Heart right ventricle (tissue), 16 donors: ENCODE measurements at regions of chr2 and their contacts with region 1.

Region 1: GRCh38 chr2:68467077-68467960 is at the starts of genes APLF and FBXO48:
- DNase-seq: peak; percentile 94 to 99
- ATAC-seq: peak; percentile 97 to 99 (median 99)
- H3K4me3 ChIP-seq: peak within 1 kb of the TSS; percentile 66 to 95 (median 78)
- H3K27ac ChIP-seq: peak within 1 kb of the TSS; percentile 2 to 94 (median 84)
- H3K4me1 ChIP-seq: peaks cover 0 to 34% (median 17%) of the 10 kb centered on the region in 9 donors
- H3K27me3 ChIP-seq: no peaks in the 10 kb centered on the region
- CTCF ChIP-seq: no peak
- total RNA-seq, gene APLF: 3.4 to 6.5 (median 5.1) TPM
- total RNA-seq, gene FBXO48: 0.27 to 1.2 (median 0.97) TPM

Region 2: DNA sequence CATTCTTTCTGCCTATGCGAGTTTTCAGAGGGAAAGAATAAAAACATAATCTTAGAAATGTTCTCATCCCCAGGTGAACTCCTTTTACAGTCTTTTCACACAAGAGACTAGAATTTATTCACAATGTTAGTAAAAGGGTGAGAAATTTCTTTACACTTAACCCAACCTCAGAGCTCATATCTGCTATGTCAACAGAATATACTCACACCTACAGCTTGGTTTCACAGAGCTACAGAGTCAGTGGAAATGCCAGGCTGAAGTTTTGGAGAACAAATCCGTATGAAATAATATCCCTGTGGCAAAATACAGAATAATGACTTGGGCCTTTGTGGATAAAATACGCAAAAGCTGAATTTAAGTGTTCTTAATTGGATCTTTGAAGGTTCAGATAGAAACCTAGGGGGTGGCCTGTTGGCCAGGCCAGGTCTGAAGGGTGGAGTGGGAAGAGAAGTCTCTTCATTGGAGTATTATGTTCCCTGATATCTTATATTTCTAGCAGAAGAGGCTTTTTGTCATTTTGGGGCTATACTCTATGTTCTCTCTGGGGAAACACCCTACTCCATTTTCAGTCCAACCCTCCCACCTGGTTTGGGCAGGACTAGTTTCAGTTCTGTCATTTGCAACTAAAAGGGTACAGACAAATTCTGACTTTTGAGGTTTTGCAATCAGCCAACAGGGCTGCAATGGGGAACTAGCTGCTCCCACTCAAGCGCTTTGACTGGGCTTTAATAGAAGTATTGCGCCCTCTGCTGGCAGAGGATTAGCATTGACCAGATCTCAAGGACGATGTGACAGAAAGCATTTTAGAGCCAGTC is 25.9 kb before region 1 on chr2:
- intact Hi-C with region 1: no loop called
- DNase-seq: peak; percentile 38 to 86
- ATAC-seq: peak; percentile 90 to 95 (median 92)
- H3K4me3 ChIP-seq: no peak overlapping the region
- H3K27ac ChIP-seq: peak overlapping the region in 7 of 10 donors; percentile 16 to 64 (median 44)
- H3K4me1 ChIP-seq: peaks cover 3 to 30% (median 14%) of the 10 kb centered on the region in 9 donors
- H3K27me3 ChIP-seq: no peaks in the 10 kb centered on the region
- CTCF ChIP-seq: peak; percentile 83 to 95 (median 91)

Region 3: GRCh38 chr2:68556381-68556780 is 89.1 kb after region 1 on chr2:
- intact Hi-C with region 1: no loop called
- DNase-seq: no peak
- ATAC-seq: no peak
- H3K4me3 ChIP-seq: no peak overlapping the region
- H3K27ac ChIP-seq: no peak overlapping the region
- H3K4me1 ChIP-seq: no peaks in the 10 kb centered on the region
- H3K27me3 ChIP-seq: no peaks in the 10 kb centered on the region
- CTCF ChIP-seq: no peak

Region 4: DNA sequence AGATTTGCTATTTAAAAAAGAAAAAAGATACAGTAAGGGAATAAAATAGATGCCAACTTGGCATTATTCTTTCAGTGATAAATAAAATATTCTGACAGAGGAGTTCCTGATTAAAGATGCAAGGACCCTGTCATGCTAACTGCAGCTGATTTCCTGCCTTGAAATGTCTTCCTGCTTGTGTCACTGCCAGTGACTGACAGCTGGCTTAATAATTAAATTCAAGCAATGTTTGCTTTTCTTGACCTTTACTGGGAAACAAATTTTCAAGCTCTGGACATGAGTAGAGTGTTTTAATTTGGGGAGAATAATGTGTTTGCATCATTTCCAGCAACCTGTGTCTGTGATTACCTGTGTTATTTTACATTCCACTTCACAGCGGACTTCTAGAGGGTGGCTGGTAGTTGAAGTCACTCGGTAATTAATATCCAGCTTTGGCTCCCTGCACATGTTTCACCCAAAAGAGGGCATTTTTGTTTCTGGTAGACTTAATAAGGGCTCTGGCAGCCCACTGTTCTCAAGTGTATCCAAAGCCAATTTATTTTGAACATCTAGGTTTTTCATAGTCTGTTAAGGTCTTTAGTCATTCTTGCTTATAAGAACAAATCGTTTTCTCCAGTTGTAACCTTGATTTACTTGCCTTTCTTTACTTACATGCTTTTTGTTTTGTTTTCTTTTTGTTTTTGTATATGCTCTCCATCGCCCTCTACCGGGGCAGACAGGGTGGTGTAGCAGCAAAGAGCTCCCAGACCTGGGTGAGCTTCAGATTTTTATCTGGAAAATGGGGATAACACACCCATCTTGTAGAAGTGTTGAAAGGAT is 127.6 kb after region 1 on chr2:
- intact Hi-C with region 1: loop called in 3 of 10 experiments (anchors 2 to 10 kb)
- DNase-seq: peak; percentile 10 to 17
- ATAC-seq: peak in 4 of 8 donors; percentile 42 to 79 (median 69)
- H3K4me3 ChIP-seq: peak overlapping the region in 3 of 10 donors; percentile 6 to 21 (median 15)
- H3K27ac ChIP-seq: peak overlapping the region in 7 of 10 donors; percentile 23 to 61 (median 42)
- H3K4me1 ChIP-seq: peaks cover 0 to 15% (median 4%) of the 10 kb centered on the region in 9 donors
- H3K27me3 ChIP-seq: no peaks in the 10 kb centered on the region
- CTCF ChIP-seq: peak; percentile 32 to 90 (median 77)

Region 5: GRCh38 chr2:68620772-68621171 is 153.5 kb after region 1 on chr2:
- intact Hi-C with region 1: no loop called
- DNase-seq: no peak
- ATAC-seq: no peak
- H3K4me3 ChIP-seq: no peak overlapping the region
- H3K27ac ChIP-seq: no peak overlapping the region
- H3K4me1 ChIP-seq: no peaks in the 10 kb centered on the region
- H3K27me3 ChIP-seq: no peaks in the 10 kb centered on the region
- CTCF ChIP-seq: no peak

Region 6: DNA sequence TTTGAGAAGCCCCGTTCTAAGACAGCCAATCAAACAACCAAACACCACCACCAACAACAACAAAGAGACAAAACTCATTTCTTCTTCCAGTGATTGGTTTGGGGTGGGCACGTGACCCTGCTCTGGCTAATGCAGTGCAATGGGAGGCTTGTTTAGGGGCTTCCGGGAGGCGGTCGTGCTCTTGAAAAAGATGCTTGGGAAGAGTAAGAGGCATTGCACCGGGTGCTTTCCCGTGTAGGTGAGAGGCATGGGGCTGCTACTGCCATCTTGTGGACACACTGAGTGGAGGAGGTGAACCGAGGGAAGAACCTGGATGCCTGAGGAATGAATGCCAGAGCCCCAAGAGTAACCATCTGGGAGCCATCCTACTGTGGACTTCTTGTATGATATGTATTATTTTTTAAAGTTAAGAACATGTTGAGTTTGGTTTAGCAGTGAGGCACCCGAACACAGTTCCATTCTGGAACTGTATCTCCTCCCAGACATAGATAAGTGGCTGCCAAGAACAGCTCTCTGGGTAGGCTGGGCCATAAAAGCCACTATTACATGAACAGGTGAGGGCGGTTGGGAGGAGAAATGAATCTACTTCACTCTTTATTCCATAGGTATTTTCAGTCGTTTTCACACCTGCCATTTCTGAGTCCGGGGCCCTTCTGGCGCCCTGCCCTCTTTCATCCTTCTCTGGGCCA is 248.2 kb after region 1 on chr2:
- intact Hi-C with region 1: loop called in 4 of 10 experiments (anchors 2 to 10 kb)
- DNase-seq: no peak
- ATAC-seq: peak in 5 of 8 donors; percentile 31 to 73 (median 54)
- H3K4me3 ChIP-seq: no peak overlapping the region
- H3K27ac ChIP-seq: peak overlapping the region in 1 of 10 donors; percentile 70
- H3K4me1 ChIP-seq: peaks cover 0 to 36% (median 0%) of the 10 kb centered on the region in 9 donors
- H3K27me3 ChIP-seq: peaks cover 0 to 16% (median 0%) of the 10 kb centered on the region in 7 donors
- CTCF ChIP-seq: peak; percentile 22 to 71 (median 62)